ENCODE measurements at regions of chr15 and their contacts with region 1.

Region 1: DNA sequence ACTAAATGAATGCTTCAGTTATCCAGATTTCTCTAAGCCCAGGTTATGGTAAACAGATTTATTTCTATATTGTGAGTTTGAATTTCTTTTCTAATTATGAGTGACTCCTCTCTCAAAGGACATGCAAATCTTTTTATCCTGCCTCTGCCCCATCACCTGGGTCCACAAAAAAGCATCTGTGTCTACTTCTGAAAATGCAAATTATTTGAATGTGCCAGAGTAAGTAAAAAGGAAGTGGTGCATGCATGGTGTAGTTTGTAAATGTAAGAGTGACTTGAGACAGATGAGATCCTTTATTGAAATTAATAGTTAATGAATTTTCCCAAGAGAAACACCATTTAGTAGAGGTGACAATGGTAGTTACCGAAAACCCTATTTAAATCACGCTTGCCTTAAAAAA is 26.9 kb downstream of the MCTP2 start:
- DNase-seq: no peak
- H3K4me3 Mint-ChIP-seq: no peak overlapping the region
- H3K27ac Mint-ChIP-seq: no peak overlapping the region
- H3K4me1 Mint-ChIP-seq: peaks cover 33% of the 10 kb centered on the region
- H3K27me3 Mint-ChIP-seq: no peaks in the 10 kb centered on the region
- CTCF ChIP-seq: no peak

Region 2: DNA sequence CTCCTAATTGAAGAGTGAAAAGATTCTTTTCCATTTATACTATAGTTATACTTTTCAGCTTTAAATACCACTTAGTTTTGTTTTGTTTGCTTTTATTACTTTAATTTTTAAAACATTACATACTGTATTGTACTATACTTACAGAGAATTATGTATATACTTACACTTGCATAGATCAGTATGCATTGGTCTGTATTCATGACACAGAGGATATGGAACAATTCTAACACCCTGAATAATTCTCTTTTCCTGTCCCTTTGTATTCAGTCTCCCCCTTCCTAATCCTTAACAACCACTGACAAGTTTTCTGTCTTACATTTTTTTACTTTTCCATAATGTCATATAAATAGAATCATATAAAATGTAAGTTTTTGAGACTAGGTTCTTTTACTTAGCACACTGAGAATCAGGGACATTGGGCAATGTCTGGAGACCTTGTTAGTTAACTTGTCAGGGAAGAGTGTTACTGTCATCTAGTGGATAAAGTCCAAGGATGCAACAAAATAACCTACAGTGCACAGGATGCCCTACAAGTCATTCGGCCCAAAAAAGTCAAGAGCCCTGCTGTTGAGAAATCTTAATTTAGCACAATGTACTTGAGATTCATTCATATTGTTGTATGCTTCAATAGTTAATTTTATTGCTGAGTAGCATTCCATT is 122.6 kb before region 1 on chr15:
- CTCF ChIA-PET with region 1: no interaction called
- intact Hi-C with region 1: no loop called
- DNase-seq: no peak
- H3K4me3 Mint-ChIP-seq: no peak overlapping the region
- H3K27ac Mint-ChIP-seq: no peak overlapping the region
- H3K4me1 Mint-ChIP-seq: no peaks in the 10 kb centered on the region
- H3K27me3 Mint-ChIP-seq: peaks cover 67% of the 10 kb centered on the region
- CTCF ChIP-seq: no peak

Region 3: GRCh38 chr15:94238539-94239118 is 19.6 kb before region 1 on chr15:
- CTCF ChIA-PET with region 1: interaction called, 3 read pairs
- intact Hi-C with region 1: loop called (anchors 2 kb)
- DNase-seq: no peak
- H3K4me3 Mint-ChIP-seq: peak overlapping the region; percentile 33
- H3K27ac Mint-ChIP-seq: peak overlapping the region; percentile 85
- H3K4me1 Mint-ChIP-seq: peaks cover 68% of the 10 kb centered on the region
- H3K27me3 Mint-ChIP-seq: no peaks in the 10 kb centered on the region
- CTCF ChIP-seq: no peak

Region 4: DNA sequence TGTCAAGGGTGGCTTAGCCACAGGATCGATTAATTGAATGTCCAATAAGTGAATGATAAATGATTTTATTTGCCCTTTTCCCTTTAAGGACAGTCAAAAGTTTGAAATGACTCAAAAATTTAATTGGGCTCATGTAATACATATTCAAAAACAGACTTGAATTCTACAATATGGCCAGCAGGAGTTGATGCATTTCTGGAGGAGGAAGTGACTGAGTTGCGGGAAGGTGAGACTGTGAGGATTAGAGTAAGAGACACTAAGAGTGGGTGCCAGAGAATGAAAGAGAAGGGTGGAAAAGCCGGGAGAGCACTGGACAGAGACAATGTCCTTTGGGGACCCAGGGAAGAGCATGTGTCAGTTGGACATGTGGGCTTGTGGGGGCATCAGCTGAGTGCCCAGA is 56.4 kb after region 1 on chr15:
- CTCF ChIA-PET with region 1: no interaction called
- intact Hi-C with region 1: loop called (anchors 5 kb)
- DNase-seq: no peak
- H3K4me3 Mint-ChIP-seq: no peak overlapping the region
- H3K27ac Mint-ChIP-seq: no peak overlapping the region
- H3K4me1 Mint-ChIP-seq: no peaks in the 10 kb centered on the region
- H3K27me3 Mint-ChIP-seq: no peaks in the 10 kb centered on the region
- CTCF ChIP-seq: no peak

Region 5: DNA sequence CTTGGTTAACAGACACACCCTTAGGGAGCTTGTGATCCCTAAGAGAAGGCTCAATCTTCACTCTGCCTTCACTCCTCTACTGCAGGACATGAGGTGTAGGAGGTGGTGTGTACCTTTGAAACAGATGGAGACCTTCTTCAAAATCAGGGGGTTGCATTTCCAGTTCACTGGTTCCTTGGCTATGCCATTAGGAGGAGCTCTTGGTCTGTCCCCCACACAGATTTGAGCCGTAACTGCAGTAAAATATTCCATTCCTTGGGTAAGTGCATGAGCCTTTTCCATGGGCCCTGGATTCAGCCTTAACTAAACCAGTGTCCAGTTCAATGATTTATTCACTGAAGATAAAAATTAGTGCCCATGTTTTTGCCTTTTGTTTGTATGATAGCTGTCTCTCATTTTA is 117.8 kb after region 1 on chr15:
- CTCF ChIA-PET with region 1: no interaction called
- intact Hi-C with region 1: no loop called
- DNase-seq: no peak
- H3K4me3 Mint-ChIP-seq: no peak overlapping the region
- H3K27ac Mint-ChIP-seq: no peak overlapping the region
- H3K4me1 Mint-ChIP-seq: no peaks in the 10 kb centered on the region
- H3K27me3 Mint-ChIP-seq: no peaks in the 10 kb centered on the region
- CTCF ChIP-seq: no peak